Activated T-helper 1 cell treated with anti-CD3 and anti-CD28 coated beads, Interleukin-12 subunit alpha, Interleukin-12 subunit beta, Interleukin-2, Interleukin-4 antibody, amounts not matched to agents 30 ng/mL and 10 ng/mL and 1 ng/mL, durations not matched to agents 14 hours and 24 hours and 36 hours (primary cell): ENCODE measurements at regions of chr3 and their contacts with region 1.

Region 1: DNA sequence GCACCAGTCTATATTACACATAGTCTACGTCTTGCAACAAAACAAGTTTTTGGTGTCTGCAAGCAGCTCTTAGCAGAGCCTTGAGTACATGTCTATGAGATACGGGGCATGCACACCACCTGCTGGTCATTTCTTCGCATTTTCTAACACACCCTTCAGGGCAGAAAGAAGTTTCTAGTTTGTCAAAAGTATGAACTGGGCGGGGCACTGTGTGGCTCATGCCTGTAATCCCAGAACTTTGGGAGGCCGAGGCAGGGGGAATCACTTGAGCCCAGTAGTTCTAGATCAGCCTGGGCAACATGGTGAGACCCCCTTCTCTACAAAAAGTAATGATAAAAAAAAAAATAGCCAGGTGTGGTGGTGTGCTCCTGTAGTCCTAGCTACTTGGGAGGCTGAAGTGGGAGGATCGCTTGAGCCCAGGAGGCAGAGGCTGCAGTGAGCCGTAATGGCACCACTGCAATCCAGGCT is 64.2 kb upstream of the ARL8B start:
- DNase-seq: peak; percentile 69
- H3K4me3 Mint-ChIP-seq: peak overlapping the region; percentile 23
- H3K27ac Mint-ChIP-seq: peak overlapping the region; percentile 53
- H3K4me1 Mint-ChIP-seq: peaks cover 52% of the 10 kb centered on the region
- H3K27me3 Mint-ChIP-seq: no peaks in the 10 kb centered on the region

Region 2: GRCh38 chr3:4660936-4661335 is 397.0 kb before region 1 on chr3:
- intact Hi-C with region 1: loop called (anchors 2 kb)
- DNase-seq: no peak
- H3K4me3 Mint-ChIP-seq: no peak overlapping the region
- H3K27ac Mint-ChIP-seq: no peak overlapping the region
- H3K4me1 Mint-ChIP-seq: no peaks in the 10 kb centered on the region
- H3K27me3 Mint-ChIP-seq: no peaks in the 10 kb centered on the region

Region 3: GRCh38 chr3:4722103-4722502 is 335.8 kb before region 1 on chr3:
- intact Hi-C with region 1: loop called (anchors 1 kb)
- DNase-seq: no peak
- H3K4me3 Mint-ChIP-seq: no peak overlapping the region
- H3K27ac Mint-ChIP-seq: peak overlapping the region; percentile 90
- H3K4me1 Mint-ChIP-seq: peaks cover 78% of the 10 kb centered on the region
- H3K27me3 Mint-ChIP-seq: no peaks in the 10 kb centered on the region

Region 4: GRCh38 chr3:4972652-4973643 is 84.9 kb before region 1 on chr3:
- intact Hi-C with region 1: no loop called
- DNase-seq: no peak
- H3K4me3 Mint-ChIP-seq: no peak overlapping the region
- H3K27ac Mint-ChIP-seq: peak overlapping the region; percentile 18
- H3K4me1 Mint-ChIP-seq: peaks cover 39% of the 10 kb centered on the region
- H3K27me3 Mint-ChIP-seq: no peaks in the 10 kb centered on the region

Region 5: DNA sequence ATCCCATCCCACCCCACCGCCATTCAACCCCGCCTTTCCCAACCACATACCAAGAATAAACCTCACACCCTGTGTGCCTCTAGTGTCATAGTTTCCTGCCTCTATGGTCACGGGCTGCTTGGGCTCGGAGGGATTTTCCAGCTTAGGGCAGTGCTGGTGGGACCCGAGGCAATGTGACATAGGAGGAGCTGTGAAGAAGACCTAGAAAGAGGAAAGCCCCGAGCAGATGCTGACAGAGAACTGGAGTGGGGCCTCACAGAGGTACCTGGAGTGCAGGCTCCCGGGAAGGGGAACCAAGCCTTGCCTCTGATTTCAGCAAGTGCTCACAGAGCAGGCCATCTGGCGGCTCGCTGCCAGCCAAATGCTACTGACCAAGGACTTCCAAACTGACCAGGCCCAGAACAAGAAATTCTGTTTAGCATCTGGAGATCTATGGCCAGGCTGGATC is 51.1 kb before region 1 on chr3:
- intact Hi-C with region 1: loop called (anchors 1 kb)
- DNase-seq: peak; percentile 88
- H3K4me3 Mint-ChIP-seq: peak overlapping the region; percentile 71
- H3K27ac Mint-ChIP-seq: peak overlapping the region; percentile 89
- H3K4me1 Mint-ChIP-seq: peaks cover 72% of the 10 kb centered on the region
- H3K27me3 Mint-ChIP-seq: no peaks in the 10 kb centered on the region

Region 6: GRCh38 chr3:5035692-5036391 is 22.0 kb before region 1 on chr3:
- intact Hi-C with region 1: loop called (anchors 1 kb)
- DNase-seq: no peak
- H3K4me3 Mint-ChIP-seq: no peak overlapping the region
- H3K27ac Mint-ChIP-seq: peak overlapping the region; percentile 55
- H3K4me1 Mint-ChIP-seq: peaks cover 55% of the 10 kb centered on the region
- H3K27me3 Mint-ChIP-seq: no peaks in the 10 kb centered on the region

Region 7: GRCh38 chr3:5092018-5092417 is 34.1 kb after region 1 on chr3:
- intact Hi-C with region 1: no loop called
- DNase-seq: no peak
- H3K4me3 Mint-ChIP-seq: no peak overlapping the region
- H3K27ac Mint-ChIP-seq: no peak overlapping the region
- H3K4me1 Mint-ChIP-seq: peaks cover 4% of the 10 kb centered on the region
- H3K27me3 Mint-ChIP-seq: peaks cover 47% of the 10 kb centered on the region